AG04449 (cell line): ENCODE measurements at regions of chr13 and their contacts with region 1.

Region 1: GRCh38 chr13:101144808-101145419 is 271.4 kb downstream of the NALCN start:
- DNase-seq: no peak
- H3K4me3 ChIP-seq: no peak overlapping the region
- CTCF ChIP-seq: peak; percentile 19

Region 2: DNA sequence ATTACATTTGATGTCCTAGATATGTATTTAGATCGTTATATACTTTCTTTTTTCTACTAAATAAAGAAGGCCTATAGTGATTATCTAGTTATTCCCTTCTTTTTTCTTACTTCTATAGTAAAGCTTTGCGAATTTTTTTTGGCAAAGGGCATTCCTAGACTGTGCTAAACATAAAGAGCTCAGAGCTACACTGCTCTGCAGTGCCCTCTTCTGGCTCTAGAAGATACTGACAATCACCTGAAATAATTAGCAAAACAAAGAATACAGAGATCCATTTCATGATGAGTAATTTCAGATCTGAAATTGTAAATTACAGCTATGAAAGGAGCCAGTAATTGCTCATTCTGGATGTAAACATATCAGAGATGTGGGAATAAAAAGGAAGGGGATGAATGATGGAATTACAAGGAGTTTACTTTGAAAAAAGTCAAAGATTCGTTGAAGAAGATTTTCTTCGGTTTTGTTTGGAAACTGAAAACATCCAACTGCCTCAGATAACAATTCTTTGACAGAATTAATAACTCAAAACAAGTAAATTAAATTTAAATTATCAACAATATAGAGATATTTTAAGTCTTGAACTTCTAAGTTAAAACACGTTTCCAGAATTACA is 17.1 kb before region 1 on chr13:
- CTCF ChIA-PET with region 1: interaction called, 14 read pairs
- POLR2A ChIA-PET with region 1: no interaction called
- DNase-seq: no peak
- H3K4me3 ChIP-seq: no peak overlapping the region
- CTCF ChIP-seq: peak; percentile 64

Region 3: DNA sequence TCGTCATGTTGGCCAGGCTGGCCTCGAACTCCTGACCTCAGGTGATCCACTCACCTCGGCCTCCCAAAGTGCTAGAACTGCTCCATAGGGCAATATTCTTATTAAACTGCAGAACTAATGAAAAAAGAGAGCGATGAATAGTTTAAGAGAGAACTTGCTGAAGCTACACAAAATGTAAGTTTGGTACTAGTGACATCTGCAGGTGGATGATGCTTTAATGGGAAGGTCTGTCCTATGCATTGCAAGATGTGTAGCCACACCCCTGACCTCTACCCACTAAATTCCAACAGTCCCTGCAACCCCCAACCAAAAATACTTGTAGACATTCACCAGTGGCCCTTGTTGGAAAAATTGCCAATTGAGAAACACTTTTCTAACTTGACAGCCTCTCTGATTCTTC is 153.6 kb after region 1 on chr13:
- CTCF ChIA-PET with region 1: interaction called, 24 read pairs
- POLR2A ChIA-PET with region 1: no interaction called
- DNase-seq: no peak
- H3K4me3 ChIP-seq: no peak overlapping the region
- CTCF ChIP-seq: no peak

Region 4: GRCh38 chr13:101325423-101325822 is 180.5 kb after region 1 on chr13:
- CTCF ChIA-PET with region 1: no interaction called
- POLR2A ChIA-PET with region 1: no interaction called
- DNase-seq: no peak
- H3K4me3 ChIP-seq: no peak overlapping the region
- CTCF ChIP-seq: no peak

Region 5: GRCh38 chr13:101452519-101453485 is 307.9 kb after region 1 on chr13 and contains the start of gene ITGBL1:
- CTCF ChIA-PET with region 1: interaction called, 53 read pairs
- POLR2A ChIA-PET with region 1: no interaction called
- DNase-seq: no peak
- H3K4me3 ChIP-seq: peak within 1 kb of the TSS; percentile 86
- CTCF ChIP-seq: no peak

Region 6: GRCh38 chr13:101492251-101492910 is 347.5 kb after region 1 on chr13:
- CTCF ChIA-PET with region 1: interaction called, 14 read pairs
- POLR2A ChIA-PET with region 1: no interaction called
- DNase-seq: no peak
- H3K4me3 ChIP-seq: no peak overlapping the region
- CTCF ChIP-seq: no peak

Region 7: DNA sequence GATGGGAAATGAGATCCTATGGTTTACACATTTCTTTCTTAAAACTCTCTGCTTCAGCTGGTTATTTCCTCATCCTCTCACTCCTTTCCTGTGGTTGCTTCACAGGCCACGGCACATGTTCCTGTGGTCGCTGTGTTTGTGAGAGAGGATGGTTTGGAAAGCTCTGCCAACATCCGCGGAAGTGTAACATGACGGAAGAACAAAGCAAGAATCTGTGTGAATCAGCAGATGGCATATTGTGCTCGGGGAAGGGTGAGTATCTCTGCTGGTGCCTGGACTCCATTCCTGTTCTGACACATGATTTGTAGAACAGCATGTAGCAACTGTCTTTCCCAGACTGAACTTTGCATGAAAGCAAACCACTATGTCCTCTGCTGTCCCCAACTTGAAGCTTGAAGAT is 561.7 kb after region 1 on chr13:
- CTCF ChIA-PET with region 1: interaction called, 11 read pairs
- POLR2A ChIA-PET with region 1: no interaction called
- DNase-seq: peak; percentile 81
- H3K4me3 ChIP-seq: no peak overlapping the region
- CTCF ChIP-seq: no peak

Region 8: DNA sequence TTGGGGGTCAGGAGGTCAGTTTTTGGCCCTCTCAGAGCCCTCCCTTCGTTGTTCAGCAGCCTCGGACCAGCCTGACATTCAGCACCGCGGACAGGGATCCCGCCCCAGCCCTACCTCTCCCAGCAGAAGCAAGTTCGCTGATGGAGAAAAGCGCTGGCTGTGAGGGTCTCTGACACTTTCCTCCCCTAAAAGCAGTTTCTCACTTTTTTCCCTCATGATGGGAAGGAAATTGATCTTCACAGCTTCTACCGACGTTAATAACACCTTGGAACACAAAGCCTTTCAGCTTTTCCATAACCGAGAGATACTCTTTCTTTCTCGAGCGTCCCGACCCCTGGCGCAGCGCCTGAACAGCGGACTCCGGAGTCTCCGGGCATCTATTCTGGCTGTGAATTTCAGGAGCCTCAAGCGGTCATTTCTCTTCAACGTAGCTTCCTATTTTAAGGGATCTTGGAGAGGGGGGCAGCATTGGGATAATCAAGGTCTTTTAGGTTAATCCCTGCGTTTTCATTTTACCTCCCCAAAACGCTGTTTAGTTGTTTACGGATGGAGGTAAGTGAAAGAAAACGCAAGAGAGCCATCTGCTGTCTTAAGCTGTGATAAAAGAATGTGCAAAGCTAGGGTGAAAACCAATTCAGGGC is 774.7 kb after region 1 on chr13:
- CTCF ChIA-PET with region 1: interaction called, 14 read pairs
- POLR2A ChIA-PET with region 1: no interaction called
- DNase-seq: no peak
- H3K4me3 ChIP-seq: no peak overlapping the region
- CTCF ChIP-seq: no peak